Dorsolateral prefrontal cortex (tissue), 120 donors: ENCODE measurements at regions of chr3 and their contacts with region 1.

Region 1: DNA sequence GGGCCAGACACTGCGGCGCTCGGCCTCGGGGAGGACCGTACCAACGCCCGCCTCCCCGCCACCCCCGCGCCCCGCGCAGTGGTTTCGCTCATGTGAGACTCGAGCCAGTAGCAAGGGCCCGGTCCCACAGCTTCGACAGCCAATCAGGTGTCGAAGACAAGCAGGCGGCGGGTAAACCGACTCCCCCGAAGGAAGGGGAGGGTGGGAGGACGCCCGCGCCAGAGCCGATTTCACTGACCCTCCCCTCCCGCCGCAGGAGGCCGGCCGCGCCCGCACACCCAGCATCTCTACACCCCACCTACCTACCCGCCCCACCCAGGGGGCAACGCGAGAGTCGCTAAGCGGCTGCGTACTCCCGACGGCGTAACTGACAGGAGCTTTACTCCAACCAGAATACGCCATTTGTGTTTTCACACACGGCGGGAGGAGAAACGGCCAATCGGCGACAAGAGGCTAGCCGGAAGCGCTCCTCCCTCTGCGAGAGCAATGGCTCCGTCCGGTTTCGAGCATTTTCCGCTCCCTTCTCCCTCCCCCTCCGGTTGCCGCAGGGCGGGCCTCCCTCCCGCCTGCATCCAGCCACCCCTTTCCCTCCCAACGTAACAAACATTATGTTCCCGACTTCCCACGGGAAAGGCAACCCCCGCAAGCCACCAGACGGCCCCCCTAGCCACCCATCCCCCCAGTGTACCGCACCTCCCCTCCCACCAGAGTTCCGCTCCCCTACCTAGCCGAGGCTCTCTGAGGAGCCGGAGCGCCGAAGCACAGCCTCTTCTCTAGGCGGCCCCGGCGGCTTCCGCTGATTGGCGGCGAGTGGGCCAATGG is 504 bp upstream of the SETD5 start:
- DNase-seq: peak; percentile 97 to 99 (median 98)
- H3K4me3 ChIP-seq: peak overlapping the region; percentile 57 to 99 (median 90)
- H3K27ac ChIP-seq: peak overlapping the region; percentile 77 to 100 (median 98)
- H3K27me3 ChIP-seq: no peaks in the 10 kb centered on the region
- CTCF ChIP-seq: peak in 7 of 56 donors; percentile 6 to 18 (median 9)

Region 2: GRCh38 chr3:9362731-9363530 is 34.0 kb before region 1 on chr3 and contains the start of gene THUMPD3:
- intact Hi-C with region 1: loop called (anchors 2 kb)
- DNase-seq: peak; percentile 91 to 97 (median 94)
- H3K4me3 ChIP-seq: peak within 1 kb of the TSS; percentile 40 to 97 (median 85)
- H3K27ac ChIP-seq: peak within 1 kb of the TSS in 58 of 59 donors; percentile 72 to 95 (median 88)
- H3K27me3 ChIP-seq: no peaks in the 10 kb centered on the region
- CTCF ChIP-seq: peak in 40 of 56 donors; percentile 8 to 58 (median 28)
- total RNA-seq, gene THUMPD3: 25.3 to 57.4 (median 39.8) TPM

Region 3: DNA sequence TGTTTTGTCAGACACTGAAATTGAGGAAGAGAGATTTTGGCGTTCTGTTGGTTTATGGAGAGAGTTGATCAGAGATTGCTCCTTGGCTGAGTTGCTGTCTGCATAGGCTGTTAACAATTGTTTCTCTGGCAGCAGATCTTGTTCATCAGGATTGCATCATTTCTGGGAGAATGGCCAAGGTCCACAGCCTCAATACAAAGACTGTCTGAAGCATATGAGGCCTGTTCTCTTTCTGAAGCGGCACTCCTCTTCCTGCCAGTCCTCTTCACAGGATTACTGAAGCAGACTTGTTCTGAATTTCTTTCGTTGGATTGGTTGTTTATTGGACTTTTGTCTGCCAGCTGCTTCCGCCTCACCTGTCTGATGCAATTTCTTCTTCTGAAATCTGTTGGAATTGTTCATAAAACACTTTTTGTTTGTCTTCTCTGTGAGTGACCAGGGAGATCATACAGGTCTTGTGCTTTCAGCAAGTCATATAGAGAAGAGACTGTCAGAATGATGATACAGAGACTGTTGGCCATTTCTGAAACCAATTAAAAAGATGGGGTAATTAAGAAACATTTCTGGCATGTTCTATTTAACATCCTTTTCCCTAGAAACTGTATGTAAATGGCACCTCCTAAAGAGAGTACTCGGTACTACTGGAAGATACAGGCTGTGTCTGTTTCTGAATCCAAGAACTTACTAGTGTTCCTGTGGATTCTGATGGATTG is 26.0 kb after region 1 on chr3:
- intact Hi-C with region 1: loop called (anchors 1 kb)
- DNase-seq: peak in 9 of 10 donors; percentile 62 to 94 (median 75)
- H3K4me3 ChIP-seq: peak overlapping the region in 43 of 59 donors; percentile 0 to 48 (median 21)
- H3K27ac ChIP-seq: peak overlapping the region; percentile 33 to 97 (median 90)
- H3K27me3 ChIP-seq: no peaks in the 10 kb centered on the region
- CTCF ChIP-seq: peak in 52 of 56 donors; percentile 29 to 70 (median 50)

Region 4: GRCh38 chr3:9503283-9503682 is 106.4 kb after region 1 on chr3:
- intact Hi-C with region 1: loop called in 1 of 2 experiments (anchors 5 kb)
- DNase-seq: peak; percentile 47 to 87 (median 72)
- H3K4me3 ChIP-seq: no peak overlapping the region
- H3K27ac ChIP-seq: no peak overlapping the region
- H3K27me3 ChIP-seq: peaks cover 0 to 3% (median 0%) of the 10 kb centered on the region in 45 donors
- CTCF ChIP-seq: peak; percentile 73 to 95 (median 84)

Region 5: DNA sequence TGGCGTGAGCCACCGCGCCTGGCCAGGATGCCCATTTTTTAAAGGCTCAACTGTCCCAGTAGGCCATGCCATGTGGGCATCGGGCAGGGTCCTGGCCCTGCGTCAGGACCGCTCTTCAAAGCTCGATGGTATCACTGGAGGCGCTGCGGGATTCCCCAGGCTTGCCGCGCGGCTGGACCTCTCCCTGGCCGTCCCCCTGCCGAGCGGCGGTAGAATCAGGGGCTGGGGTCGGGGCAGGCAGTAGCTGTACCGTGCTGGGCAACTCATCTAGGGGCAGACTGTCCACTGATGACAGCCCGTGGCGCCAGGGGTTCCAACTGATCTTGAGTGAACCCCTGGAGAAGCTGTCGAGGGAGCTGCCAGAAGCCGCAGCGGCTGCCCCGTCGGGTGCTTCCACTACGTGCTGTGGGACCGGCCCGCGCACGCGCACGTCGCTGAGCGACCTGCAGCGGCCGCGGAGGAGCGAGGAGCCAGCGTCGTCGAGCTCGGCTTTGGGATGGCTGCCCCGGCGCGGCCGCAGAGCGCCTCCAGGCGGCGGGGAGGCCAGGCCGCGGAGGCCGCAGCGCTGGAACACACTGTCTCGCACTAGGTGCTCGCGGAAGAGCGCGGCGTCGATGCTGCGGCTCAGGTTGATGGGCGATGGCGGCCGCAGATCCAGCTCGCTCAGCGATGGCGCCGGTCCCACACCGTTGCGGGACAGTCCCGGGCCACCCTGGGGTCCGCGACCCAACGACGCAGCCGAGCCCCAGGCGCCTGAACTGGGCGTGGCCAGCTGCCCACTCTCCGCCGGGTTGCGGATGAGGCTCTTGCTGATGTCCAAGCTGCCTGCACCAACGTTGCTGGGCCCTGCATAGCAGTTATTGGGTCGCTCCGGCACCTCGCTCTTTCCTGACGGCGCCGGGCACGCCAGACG is 549.5 kb after region 1 on chr3:
- intact Hi-C with region 1: no loop called
- DNase-seq: peak; percentile 70 to 88 (median 76)
- H3K4me3 ChIP-seq: peak overlapping the region; percentile 42 to 81 (median 64)
- H3K27ac ChIP-seq: peak overlapping the region; percentile 46 to 95 (median 87)
- H3K27me3 ChIP-seq: no peaks in the 10 kb centered on the region
- CTCF ChIP-seq: peak; percentile 19 to 86 (median 74)